Testis (tissue), 5 donors: ENCODE measurements at regions of chr6 and their contacts with region 1.

Region 1: GRCh38 chr6:89242574-89243330 is 25.6 kb upstream of the GABRR1 start:
- DNase-seq: no peak
- H3K4me3 ChIP-seq: no peak overlapping the region
- H3K27ac ChIP-seq: no peak overlapping the region
- H3K4me1 ChIP-seq: no peaks in the 10 kb centered on the region
- H3K27me3 ChIP-seq: no peaks in the 10 kb centered on the region
- CTCF ChIP-seq: peak in 2 of 3 experiments; percentile 44 to 53
- POLR2A ChIP-seq: no peak

Region 2: GRCh38 chr6:88748141-88748540 is 494.6 kb before region 1 on chr6:
- intact Hi-C with region 1: no loop called
- DNase-seq: no peak
- H3K4me3 ChIP-seq: no peak overlapping the region
- H3K27ac ChIP-seq: no peak overlapping the region
- H3K4me1 ChIP-seq: no peaks in the 10 kb centered on the region
- H3K27me3 ChIP-seq: no peaks in the 10 kb centered on the region
- CTCF ChIP-seq: no peak
- POLR2A ChIP-seq: no peak

Region 3: GRCh38 chr6:88982720-88983119 is 260.0 kb before region 1 on chr6:
- intact Hi-C with region 1: loop called (anchors 5 kb)
- DNase-seq: peak; percentile 43
- H3K4me3 ChIP-seq: no peak overlapping the region
- H3K27ac ChIP-seq: no peak overlapping the region
- H3K4me1 ChIP-seq: peaks cover 3% of the 10 kb centered on the region
- H3K27me3 ChIP-seq: no peaks in the 10 kb centered on the region
- CTCF ChIP-seq: peak; percentile 56 to 81 (median 65)
- POLR2A ChIP-seq: no peak

Region 4: DNA sequence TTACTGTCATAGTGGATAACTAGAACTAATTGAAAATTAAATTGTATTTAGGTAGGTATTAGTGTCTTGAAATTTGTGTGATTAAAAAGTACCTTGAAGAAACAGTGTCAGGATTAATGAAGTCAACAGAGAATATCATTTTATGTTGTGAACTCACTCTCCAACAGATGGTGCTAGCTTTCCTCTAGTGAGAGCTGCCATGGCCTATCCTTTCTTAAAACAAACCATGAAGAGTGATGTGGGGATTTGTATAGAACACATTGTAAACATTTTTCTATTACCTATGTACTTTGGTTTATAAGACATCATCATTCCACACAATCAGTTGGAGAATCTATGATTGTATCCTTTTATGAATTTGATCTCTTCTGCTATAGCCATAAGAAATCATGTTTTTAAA is 120.1 kb before region 1 on chr6:
- intact Hi-C with region 1: loop called (anchors 10 kb)
- DNase-seq: no peak
- H3K4me3 ChIP-seq: no peak overlapping the region
- H3K27ac ChIP-seq: no peak overlapping the region
- H3K4me1 ChIP-seq: no peaks in the 10 kb centered on the region
- H3K27me3 ChIP-seq: no peaks in the 10 kb centered on the region
- CTCF ChIP-seq: peak in 2 of 3 experiments; percentile 19 to 26
- POLR2A ChIP-seq: no peak

Region 5: DNA sequence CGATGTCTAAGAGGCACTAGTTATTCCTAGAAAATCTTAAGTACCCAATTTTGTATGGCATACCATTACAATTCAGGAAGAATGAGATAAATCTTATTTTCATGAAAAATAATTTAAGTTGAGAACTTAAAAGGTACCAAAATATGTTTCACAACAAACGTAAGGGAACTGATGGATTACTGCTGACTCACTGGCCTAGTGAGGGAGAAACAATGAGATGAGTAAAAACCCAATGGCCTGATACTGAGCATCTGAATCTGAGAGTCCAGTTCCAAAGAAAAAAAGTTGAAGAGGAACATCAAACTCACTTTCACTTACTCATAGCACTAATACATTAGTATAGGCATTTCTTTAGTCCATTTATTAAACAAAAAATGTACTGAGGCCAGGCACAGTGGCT is 520.8 kb after region 1 on chr6:
- intact Hi-C with region 1: no loop called
- DNase-seq: no peak
- H3K4me3 ChIP-seq: no peak overlapping the region
- H3K27ac ChIP-seq: no peak overlapping the region
- H3K4me1 ChIP-seq: peaks cover 19% of the 10 kb centered on the region
- H3K27me3 ChIP-seq: no peaks in the 10 kb centered on the region
- CTCF ChIP-seq: no peak
- POLR2A ChIP-seq: no peak